ENCODE measurements at regions of chr1 and their contacts with region 1.

Region 1: DNA sequence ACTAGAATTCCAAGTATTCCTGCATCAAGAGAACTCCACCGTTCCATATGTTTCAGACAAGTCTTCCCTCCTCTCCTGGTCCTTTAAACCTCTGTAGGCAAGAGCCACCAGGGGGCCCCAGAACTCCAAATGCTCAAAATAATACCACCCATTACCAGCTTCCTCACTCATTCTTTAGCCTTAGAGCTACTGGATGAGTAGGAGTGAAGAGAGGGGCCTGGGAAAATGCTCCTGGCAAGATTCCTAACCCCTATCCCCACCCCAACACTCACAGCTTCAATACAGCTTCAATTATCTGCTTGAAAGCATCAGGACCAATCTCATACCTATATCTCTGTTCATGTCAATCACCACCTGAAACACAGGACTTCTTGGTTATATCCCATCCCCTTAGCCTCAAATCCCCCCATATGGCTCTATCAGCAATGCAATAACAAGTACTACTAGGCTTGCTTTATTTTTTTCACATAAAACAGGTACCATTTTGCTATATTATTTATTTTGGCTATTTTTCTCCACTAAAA is 9.7 kb downstream of the TOR1AIP2 start:
- DNase-seq: peak; percentile 51
- CTCF ChIP-seq: peak; percentile 67

Region 2: DNA sequence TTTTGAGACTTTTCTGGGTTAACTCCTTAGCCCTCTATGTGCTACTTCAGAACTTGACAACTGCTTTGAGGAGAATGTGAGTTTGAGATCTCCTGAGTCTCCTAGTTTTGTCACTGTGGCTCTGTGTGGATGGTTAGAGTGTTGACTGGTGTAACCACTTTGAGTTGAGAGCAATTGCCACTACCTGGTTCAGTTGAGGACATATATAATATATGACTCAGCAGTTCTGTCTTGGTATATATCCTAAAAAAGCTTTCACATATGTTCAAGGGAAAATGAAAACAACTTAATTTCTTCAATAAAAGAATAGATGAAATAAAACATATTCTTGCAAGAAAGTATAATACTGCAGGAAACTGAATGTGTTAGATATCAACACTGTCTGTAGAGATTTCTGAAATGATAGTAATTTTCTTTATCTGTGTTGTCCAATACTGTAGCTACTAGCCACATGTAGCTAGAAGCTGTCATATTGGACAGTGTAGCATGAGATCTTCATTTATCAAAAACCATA is 190.1 kb after region 1 on chr1:
- in situ Hi-C with region 1: loop called (anchors 25 kb)
- DNase-seq: peak; percentile 4
- CTCF ChIP-seq: no peak

Measured in GM13977 (cell line).